PC-9 (cell line): ENCODE measurements at regions of chr2 and their contacts with region 1.

Region 1: DNA sequence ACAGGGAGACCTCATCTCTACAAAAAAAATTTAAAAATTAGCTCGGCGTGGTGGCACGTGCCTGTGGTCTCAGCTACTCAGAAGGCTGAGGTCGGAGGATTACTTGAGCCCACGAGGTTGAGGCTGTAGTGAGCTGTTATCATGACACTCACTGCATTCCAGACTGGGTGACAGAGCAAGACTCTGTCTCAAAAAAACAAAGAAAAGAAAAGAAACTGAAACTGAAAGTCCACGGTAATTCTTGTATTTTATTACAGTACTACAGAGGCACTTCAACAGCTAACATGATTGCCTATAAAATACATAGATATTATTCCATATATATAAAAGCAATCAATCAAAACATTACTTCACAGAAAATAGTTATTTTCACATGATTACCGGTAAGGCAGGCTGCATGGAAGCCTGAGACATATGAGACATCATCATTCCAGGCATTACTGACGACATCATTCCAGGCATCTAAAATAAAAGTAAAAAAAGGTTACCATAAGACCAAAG is 23.1 kb downstream of the PRPF40A start:
- DNase-seq: no peak
- H3K4me3 ChIP-seq: no peak overlapping the region
- H3K27ac ChIP-seq: no peak overlapping the region
- H3K4me1 ChIP-seq: no peaks in the 10 kb centered on the region
- H3K27me3 ChIP-seq: no peaks in the 10 kb centered on the region
- CTCF ChIP-seq: no peak

Region 2: GRCh38 chr2:152710713-152711112 is 16.5 kb after region 1 on chr2:
- CTCF ChIA-PET with region 1: no interaction called
- POLR2A ChIA-PET with region 1: interaction called, 21 read pairs
- intact Hi-C with region 1: no loop called
- DNase-seq: no peak
- H3K4me3 ChIP-seq: no peak overlapping the region
- H3K27ac ChIP-seq: no peak overlapping the region
- H3K4me1 ChIP-seq: peaks cover 8% of the 10 kb centered on the region
- H3K27me3 ChIP-seq: no peaks in the 10 kb centered on the region
- CTCF ChIP-seq: no peak